ENCODE measurements at regions of chr19 and their contacts with region 1.

Region 1: GRCh38 chr19:53195265-53195903 is 2.2 kb upstream of the ZNF665 start:
- DNase-seq: peak; percentile 83
- H3K4me3 ChIP-seq: no peak overlapping the region
- H3K27ac ChIP-seq: peak overlapping the region; percentile 41 to 42
- H3K4me1 ChIP-seq: no peaks in the 10 kb centered on the region
- H3K27me3 ChIP-seq: no peaks in the 10 kb centered on the region
- CTCF ChIP-seq: peak; percentile 71 to 94 (median 91)
- POLR2A ChIP-seq: no peak

Region 2: DNA sequence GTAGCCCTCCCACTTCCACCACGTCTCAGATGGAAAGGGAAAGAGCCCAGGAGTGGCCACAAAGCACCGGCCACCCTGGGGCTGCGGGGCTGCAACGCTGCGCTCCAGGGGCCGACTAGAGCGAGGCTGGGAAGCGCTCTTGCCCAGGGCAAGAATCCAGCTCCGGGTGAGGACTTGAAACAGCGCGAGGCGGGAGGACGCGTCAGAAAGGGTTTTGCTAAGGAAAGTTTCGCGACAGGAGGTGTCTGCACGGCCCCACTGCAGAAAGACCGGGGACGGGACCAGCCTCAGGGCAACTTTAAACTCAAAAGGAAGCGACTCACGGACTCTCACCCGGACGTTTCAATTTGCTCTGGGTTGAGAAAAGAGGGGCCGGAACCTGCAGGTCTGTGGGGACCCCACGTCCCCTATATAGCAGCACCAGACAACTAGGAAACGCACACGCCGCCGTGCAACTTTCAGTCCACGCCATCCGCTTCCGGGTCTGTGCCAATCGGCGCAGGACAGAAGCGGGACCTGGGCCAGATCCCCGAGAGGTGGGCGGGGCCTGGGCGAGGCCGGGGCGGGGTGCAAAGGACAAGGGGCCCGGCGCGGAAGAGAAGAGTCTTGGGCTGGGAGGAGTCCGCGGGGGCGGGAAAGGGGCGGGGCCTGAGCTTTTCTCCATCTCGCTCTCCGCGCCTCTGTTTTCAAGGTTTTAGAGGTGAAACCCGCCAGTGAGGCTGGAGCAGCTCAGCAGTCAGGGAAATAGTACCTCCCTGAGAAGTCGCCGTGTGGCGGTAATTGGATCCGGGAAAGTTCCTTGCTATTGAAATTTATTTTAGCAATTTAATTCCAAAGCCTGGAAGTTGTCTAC is 232.8 kb before region 1 on chr19 and contains the start of gene ZNF816:
- intact Hi-C with region 1: loop called (anchors 10 kb)
- DNase-seq: peak; percentile 99
- H3K4me3 ChIP-seq: peak within 1 kb of the TSS; percentile 46 to 59
- H3K27ac ChIP-seq: peak within 1 kb of the TSS; percentile 72 to 74
- H3K4me1 ChIP-seq: no peaks in the 10 kb centered on the region
- H3K27me3 ChIP-seq: no peaks in the 10 kb centered on the region
- CTCF ChIP-seq: no peak
- POLR2A ChIP-seq: peak; percentile 64
- total RNA-seq, gene ZNF816: 15.8 to 31.8 TPM

Region 3: GRCh38 chr19:53333463-53334449 is 138.4 kb after region 1 on chr19 and contains the start of gene ZNF845:
- intact Hi-C with region 1: loop called (anchors 10 kb)
- DNase-seq: peak; percentile 96
- H3K4me3 ChIP-seq: peak within 1 kb of the TSS; percentile 55 to 61
- H3K27ac ChIP-seq: peak within 1 kb of the TSS; percentile 58 to 73
- H3K4me1 ChIP-seq: no peaks in the 10 kb centered on the region
- H3K27me3 ChIP-seq: no peaks in the 10 kb centered on the region
- CTCF ChIP-seq: no peak
- POLR2A ChIP-seq: peak; percentile 61
- total RNA-seq, gene ZNF845: 6.5 to 7.8 TPM

Region 4: DNA sequence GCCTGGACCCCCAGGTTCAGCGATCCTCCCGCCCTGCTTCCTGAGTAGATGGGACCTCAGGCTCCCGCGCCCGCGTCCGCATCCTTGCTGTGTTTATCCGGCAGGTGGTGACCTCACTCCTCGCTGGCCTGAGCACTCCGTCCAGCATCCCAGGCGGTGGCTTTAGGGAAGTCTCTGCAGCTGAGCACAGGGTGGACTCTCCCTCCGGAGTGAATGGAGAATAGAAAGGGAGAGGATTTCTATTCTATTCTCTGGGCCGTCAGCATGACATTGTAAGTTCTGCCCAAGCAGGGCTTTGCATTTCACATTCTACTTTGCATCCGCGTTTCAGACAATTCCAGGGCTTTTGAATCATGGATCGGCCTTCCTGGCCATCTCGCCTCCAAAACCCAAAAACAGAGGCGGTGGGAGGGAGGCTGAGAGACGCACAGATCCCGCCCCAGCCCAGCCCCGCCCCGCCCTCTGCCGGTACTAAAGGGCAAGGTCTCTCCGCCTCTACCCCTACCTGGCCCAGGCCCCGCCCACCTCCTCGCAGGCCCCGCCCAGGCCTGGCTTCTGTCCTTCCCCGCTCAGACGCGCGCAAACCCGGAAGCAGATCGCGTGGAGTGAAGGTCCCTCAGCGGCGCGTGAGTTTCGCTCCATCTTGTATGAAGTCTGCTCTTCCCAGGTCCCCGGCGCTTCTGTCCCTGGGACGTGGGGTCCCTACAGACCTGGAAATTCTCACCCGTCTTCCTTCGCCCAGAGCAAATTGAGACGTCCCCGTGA is 169.9 kb after region 1 on chr19 and contains the start of gene ZNF525:
- intact Hi-C with region 1: loop called (anchors 5 kb)
- DNase-seq: peak; percentile 91
- H3K4me3 ChIP-seq: peak within 1 kb of the TSS; percentile 55 to 65
- H3K27ac ChIP-seq: peak within 1 kb of the TSS; percentile 73 to 88
- H3K4me1 ChIP-seq: peaks cover 4% of the 10 kb centered on the region
- H3K27me3 ChIP-seq: no peaks in the 10 kb centered on the region
- CTCF ChIP-seq: peak in 2 of 4 experiments; percentile 4 to 26
- POLR2A ChIP-seq: peak; percentile 68
- total RNA-seq, gene ZNF525: 7.8 to 20.4 TPM